ENCODE measurements at regions of chr15 and their contacts with region 1.

Region 1: DNA sequence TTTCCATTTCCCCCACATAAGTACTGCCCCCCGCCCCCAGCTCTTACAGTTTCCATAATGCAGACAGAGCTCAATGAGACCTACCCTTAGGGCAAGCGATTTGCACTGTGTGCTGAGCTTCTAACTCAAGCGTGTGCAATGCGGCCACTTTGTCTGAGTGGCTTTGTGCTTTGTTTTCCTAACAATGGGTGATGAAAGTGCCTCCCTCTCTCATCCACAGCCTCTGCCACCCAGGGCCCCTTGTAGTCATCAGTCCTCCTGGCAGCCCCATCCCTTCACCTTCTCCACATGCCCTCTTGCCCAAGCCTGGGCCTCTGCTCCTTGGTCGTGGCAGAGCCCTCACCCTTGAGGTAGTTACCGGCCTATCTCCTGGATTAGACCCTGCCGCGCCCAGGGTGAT is 17.2 kb downstream of the DAPK2 start:
- DNase-seq: no peak
- ATAC-seq: peak; percentile 13
- H3K4me3 Mint-ChIP-seq: peak overlapping the region; percentile 65
- H3K27ac Mint-ChIP-seq: peak overlapping the region; percentile 81
- H3K4me1 Mint-ChIP-seq: peaks cover 68% of the 10 kb centered on the region
- H3K27me3 Mint-ChIP-seq: no peaks in the 10 kb centered on the region

Region 2: DNA sequence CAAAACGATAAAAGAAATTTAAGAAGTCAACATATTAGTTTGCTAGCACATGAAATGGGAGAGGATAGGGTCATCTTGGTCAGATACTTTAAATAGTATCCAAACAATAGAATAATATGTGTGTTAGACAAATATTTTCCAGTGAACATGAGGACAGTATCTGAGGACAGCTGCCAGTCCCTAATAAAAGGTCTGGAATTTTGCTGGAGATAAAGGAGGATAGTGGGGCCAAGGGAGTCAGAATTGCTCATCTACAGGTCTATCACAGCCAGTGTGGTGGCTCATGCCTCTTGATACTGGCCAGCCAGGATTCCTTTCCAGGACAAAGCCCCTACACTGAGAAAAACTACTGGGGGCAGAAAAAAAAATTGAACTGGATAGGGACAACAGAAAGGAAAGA is 269.4 kb before region 1 on chr15:
- CTCF ChIA-PET with region 1: no interaction called
- DNase-seq: no peak
- ATAC-seq: no peak
- H3K4me3 Mint-ChIP-seq: no peak overlapping the region
- H3K27ac Mint-ChIP-seq: no peak overlapping the region
- H3K4me1 Mint-ChIP-seq: peaks cover 33% of the 10 kb centered on the region
- H3K27me3 Mint-ChIP-seq: no peaks in the 10 kb centered on the region

Region 3: GRCh38 chr15:64010719-64011118 is 18.4 kb before region 1 on chr15:
- CTCF ChIA-PET with region 1: interaction called, 17 read pairs
- DNase-seq: peak; percentile 96
- ATAC-seq: peak; percentile 94
- H3K4me3 Mint-ChIP-seq: peak overlapping the region; percentile 57
- H3K27ac Mint-ChIP-seq: peak overlapping the region; percentile 91
- H3K4me1 Mint-ChIP-seq: peaks cover 66% of the 10 kb centered on the region
- H3K27me3 Mint-ChIP-seq: no peaks in the 10 kb centered on the region

Region 4: DNA sequence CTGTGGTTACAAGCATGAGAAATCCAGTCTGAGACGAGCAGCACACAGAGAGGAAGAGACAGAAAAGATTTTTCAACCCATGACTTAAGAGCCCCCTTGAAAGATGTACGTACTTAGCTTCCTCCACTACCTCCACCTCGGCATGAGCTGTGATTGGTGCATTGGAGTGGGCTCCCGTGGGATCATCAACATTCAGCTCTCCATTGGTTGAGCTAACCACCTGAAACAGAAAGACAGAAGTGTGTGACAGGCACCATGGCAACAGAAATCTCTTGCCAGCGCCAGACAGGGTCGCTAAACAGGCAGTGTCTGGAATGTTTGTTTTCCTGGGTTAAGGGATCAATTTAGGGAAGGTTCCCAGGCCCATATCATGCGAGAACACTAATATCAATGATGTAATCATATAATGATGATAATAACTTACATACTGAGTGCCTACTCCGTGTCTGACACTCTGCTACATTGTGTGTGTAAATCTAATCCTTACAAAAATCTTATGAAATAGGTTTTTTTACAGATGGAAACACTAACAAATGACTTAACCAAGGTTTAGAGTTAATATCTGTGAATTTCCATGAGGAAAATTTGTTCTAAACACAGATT is 151.2 kb after region 1 on chr15:
- CTCF ChIA-PET with region 1: no interaction called
- DNase-seq: no peak
- ATAC-seq: no peak
- H3K4me3 Mint-ChIP-seq: no peak overlapping the region
- H3K27ac Mint-ChIP-seq: no peak overlapping the region
- H3K4me1 Mint-ChIP-seq: no peaks in the 10 kb centered on the region
- H3K27me3 Mint-ChIP-seq: no peaks in the 10 kb centered on the region

Measured in activated CD8-positive, alpha-beta memory T cell treated with anti-CD3 and anti-CD28 coated beads, Interleukin-2, amount 10 ng/mL, durations not matched to agents 7 days and 5 days (primary cell).